T-cell (primary cell): ENCODE measurements at regions of chr9 and their contacts with region 1.

Region 1: GRCh38 chr9:104991144-104991953 is 63.4 kb upstream of the ABCA1 start:
- DNase-seq: peak; percentile 49 to 92 (median 84)
- ATAC-seq: peak; percentile 83 to 88 (median 87)
- H3K4me3 ChIP-seq: peak overlapping the region; percentile 58 to 95
- H3K4me3 Mint-ChIP-seq: peak overlapping the region; percentile 81 to 90 (median 82)
- H3K27ac ChIP-seq: peak overlapping the region; percentile 91
- H3K27ac Mint-ChIP-seq: peak overlapping the region in 1 of 2 donors; percentile 44
- H3K4me1 ChIP-seq: peaks cover 13 to 38% of the 10 kb centered on the region in 2 experiments
- H3K4me1 Mint-ChIP-seq: peaks cover 32 to 37% (median 33%) of the 10 kb centered on the region in 3 donors
- H3K27me3 ChIP-seq: peaks cover 0 to 8% of the 10 kb centered on the region in 2 experiments
- H3K27me3 Mint-ChIP-seq: peaks cover 0 to 2% of the 10 kb centered on the region in 2 donors

Region 2: DNA sequence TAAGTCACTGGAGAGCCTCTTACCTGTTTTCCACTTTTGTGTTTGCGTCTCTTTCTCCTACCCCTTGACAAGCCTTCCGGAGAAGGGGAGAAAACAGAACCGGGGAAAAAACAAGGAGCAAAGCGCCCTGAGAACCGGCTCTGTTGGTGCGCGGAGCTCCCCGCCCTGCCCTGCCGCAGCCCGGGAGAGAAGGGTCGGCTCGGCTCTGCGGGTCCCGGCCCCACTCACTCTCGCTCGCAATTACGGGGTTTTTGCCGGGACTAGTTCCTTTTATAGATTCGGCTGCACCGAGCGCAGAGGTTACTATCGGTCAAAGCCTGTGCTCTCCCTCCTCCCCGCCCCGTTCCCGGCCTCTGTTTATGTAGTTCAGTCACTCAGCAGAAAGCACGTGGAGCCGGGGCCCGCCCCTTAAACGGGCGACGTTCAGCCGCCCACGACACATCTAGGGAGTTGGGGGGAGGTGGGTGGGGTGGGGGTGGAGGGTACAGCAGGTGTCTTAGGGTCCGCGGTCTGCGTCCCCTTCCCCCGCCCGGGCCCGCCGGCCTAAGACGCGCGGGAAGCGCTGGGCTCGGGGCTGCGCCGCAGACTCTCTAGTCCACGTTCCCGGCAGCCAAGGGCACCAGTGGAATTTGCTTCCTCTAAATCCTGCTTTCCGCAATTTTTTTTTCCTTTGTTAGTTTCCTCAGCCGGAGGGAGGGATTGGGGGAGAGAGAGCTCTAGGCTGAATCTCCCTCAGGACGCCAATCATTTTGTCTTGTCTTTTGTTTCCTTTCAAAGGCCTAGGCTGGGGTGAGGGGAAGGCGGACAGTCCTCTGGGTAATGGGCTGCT is 63.2 kb before region 1 on chr9 and contains the start of gene ABCA1:
- CTCF ChIA-PET with region 1: interaction called, 3 to 8 read pairs
- POLR2A ChIA-PET with region 1: interaction called in 1 of 2 experiments, 16 read pairs
- DNase-seq: peak in 34 of 35 experiments; percentile 55 to 87 (median 74)
- ATAC-seq: peak; percentile 65 to 84 (median 70)
- H3K4me3 ChIP-seq: peak within 1 kb of the TSS; percentile 64 to 90
- H3K4me3 Mint-ChIP-seq: peak within 1 kb of the TSS; percentile 83 to 93 (median 86)
- H3K27ac ChIP-seq: peak within 1 kb of the TSS; percentile 41
- H3K27ac Mint-ChIP-seq: peak within 1 kb of the TSS in 1 of 2 donors; percentile 11
- H3K4me1 ChIP-seq: peaks cover 0 to 29% of the 10 kb centered on the region in 2 experiments
- H3K4me1 Mint-ChIP-seq: peaks cover 9 to 33% (median 22%) of the 10 kb centered on the region in 3 donors
- H3K27me3 ChIP-seq: peaks cover 0 to 31% of the 10 kb centered on the region in 2 experiments
- H3K27me3 Mint-ChIP-seq: peaks cover 0 to 1% of the 10 kb centered on the region in 2 donors
- total RNA-seq, gene ABCA1: 0.41 to 4.7 (median 0.62) TPM

Region 3: DNA sequence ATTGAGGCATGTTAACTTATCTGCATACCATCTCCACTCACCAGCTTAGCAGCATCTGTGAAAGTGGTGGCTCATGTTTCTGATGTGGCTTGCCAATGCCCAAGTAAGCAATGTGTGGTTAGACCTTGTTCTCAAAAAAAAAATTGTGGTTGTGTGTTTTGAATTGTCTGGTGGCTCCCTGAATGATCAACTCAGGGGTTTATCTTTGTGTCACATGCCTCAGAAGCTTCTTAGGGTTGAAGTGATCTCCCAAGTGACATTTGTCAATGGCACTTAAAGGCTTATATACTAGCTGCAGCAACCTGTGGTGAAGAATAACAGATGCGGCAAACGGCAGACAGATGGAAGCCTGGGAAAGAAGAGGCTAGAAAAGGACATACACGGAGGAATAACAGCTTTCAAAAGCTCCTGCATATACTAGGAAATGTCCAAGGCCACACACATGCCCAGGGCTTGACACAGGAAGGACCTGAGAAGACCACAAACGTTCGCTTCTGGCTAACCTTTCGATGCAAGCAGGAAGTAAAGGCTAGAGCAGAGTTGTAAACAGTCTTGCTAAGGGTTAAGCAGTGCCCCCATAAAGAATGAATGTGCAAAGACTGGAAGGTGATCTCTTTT is 414.3 kb after region 1 on chr9:
- CTCF ChIA-PET with region 1: no interaction called
- POLR2A ChIA-PET with region 1: no interaction called
- DNase-seq: peak; percentile 13 to 86 (median 57)
- ATAC-seq: peak; percentile 91 to 94 (median 94)
- H3K4me3 ChIP-seq: peak overlapping the region in 1 of 2 donors; percentile 10
- H3K4me3 Mint-ChIP-seq: peak overlapping the region in 2 of 3 donors; percentile 18 to 67
- H3K27ac ChIP-seq: no peak overlapping the region
- H3K27ac Mint-ChIP-seq: no peak overlapping the region
- H3K4me1 ChIP-seq: peaks cover 17 to 27% of the 10 kb centered on the region in 2 experiments
- H3K4me1 Mint-ChIP-seq: peaks cover 28 to 40% (median 31%) of the 10 kb centered on the region in 3 donors
- H3K27me3 ChIP-seq: peaks cover 0 to 37% of the 10 kb centered on the region in 2 experiments
- H3K27me3 Mint-ChIP-seq: peaks cover 45 to 65% of the 10 kb centered on the region in 2 donors